CD4-positive, alpha-beta memory T cell (primary cell): ENCODE measurements at regions of chr1 and their contacts with region 1.

Region 1: GRCh38 chr1:83508485-83509151 is 490.3 kb downstream of the TTLL7 start:
- DNase-seq: peak; percentile 66 to 79 (median 68)
- H3K4me3 ChIP-seq: peak overlapping the region in 1 of 2 donors; percentile 12
- H3K4me3 Mint-ChIP-seq: peak overlapping the region; percentile 55 to 79 (median 72)
- H3K27ac ChIP-seq: peak overlapping the region; percentile 14
- H3K27ac Mint-ChIP-seq: peak overlapping the region; percentile 81 to 93 (median 88)
- H3K4me1 ChIP-seq: peaks cover 29% of the 10 kb centered on the region
- H3K4me1 Mint-ChIP-seq: peaks cover 27 to 41% (median 30%) of the 10 kb centered on the region in 4 donors
- H3K27me3 ChIP-seq: no peaks in the 10 kb centered on the region
- H3K27me3 Mint-ChIP-seq: no peaks in the 10 kb centered on the region

Region 2: GRCh38 chr1:83490988-83491387 is 17.6 kb before region 1 on chr1:
- CTCF ChIA-PET with region 1: no interaction called
- POLR2A ChIA-PET with region 1: no interaction called
- intact Hi-C with region 1: no loop called
- DNase-seq: no peak
- H3K4me3 ChIP-seq: no peak overlapping the region
- H3K4me3 Mint-ChIP-seq: no peak overlapping the region
- H3K27ac ChIP-seq: no peak overlapping the region
- H3K27ac Mint-ChIP-seq: no peak overlapping the region
- H3K4me1 ChIP-seq: peaks cover 5% of the 10 kb centered on the region
- H3K4me1 Mint-ChIP-seq: peaks cover 5 to 8% (median 5%) of the 10 kb centered on the region in 4 donors
- H3K27me3 ChIP-seq: no peaks in the 10 kb centered on the region
- H3K27me3 Mint-ChIP-seq: no peaks in the 10 kb centered on the region

Region 3: DNA sequence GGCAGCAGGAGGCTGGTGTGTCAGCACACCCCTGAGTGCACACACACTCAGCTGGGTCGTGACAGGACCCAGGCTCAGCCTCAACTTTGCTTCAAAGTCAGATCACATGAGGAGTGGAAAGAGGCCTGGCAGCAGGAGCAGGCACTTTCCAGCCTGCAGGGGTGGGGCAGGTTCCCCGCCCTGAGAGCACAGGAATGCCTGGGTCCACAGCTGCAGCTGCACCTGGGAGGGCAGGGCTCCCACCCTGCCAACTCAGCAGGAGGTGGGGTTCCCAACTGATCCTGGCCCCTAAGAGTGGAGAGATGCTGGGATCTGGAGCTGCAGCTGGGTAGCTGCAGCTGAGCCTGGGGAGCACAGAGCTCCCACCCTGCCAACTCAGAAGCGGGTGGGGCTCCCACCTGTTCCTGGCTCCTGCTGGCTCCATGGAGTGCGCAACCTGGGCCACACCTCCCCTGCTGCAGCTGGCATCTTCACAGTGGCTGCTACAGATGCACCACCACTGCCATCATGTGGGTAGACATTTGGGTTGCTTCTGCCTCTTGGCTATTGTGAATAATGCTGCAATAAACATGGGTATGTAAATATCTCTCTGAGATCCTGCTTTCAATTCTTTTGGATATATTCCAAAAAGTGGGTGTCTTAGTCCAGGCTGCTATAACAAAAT is 74.9 kb after region 1 on chr1:
- CTCF ChIA-PET with region 1: no interaction called
- POLR2A ChIA-PET with region 1: interaction called, 3 read pairs
- intact Hi-C with region 1: loop called (anchors 1 kb)
- DNase-seq: peak in 4 of 5 donors; percentile 5 to 32 (median 12)
- H3K4me3 ChIP-seq: no peak overlapping the region
- H3K4me3 Mint-ChIP-seq: peak overlapping the region in 1 of 8 donors; percentile 51
- H3K27ac ChIP-seq: no peak overlapping the region
- H3K27ac Mint-ChIP-seq: no peak overlapping the region
- H3K4me1 ChIP-seq: no peaks in the 10 kb centered on the region
- H3K4me1 Mint-ChIP-seq: peaks cover 0 to 11% (median 3%) of the 10 kb centered on the region in 4 donors
- H3K27me3 ChIP-seq: no peaks in the 10 kb centered on the region
- H3K27me3 Mint-ChIP-seq: peaks cover 0 to 1% of the 10 kb centered on the region in 2 donors

Region 4: GRCh38 chr1:83889707-83890106 is 381.1 kb after region 1 on chr1:
- CTCF ChIA-PET with region 1: no interaction called
- POLR2A ChIA-PET with region 1: no interaction called
- intact Hi-C with region 1: no loop called
- DNase-seq: no peak
- H3K4me3 ChIP-seq: no peak overlapping the region
- H3K4me3 Mint-ChIP-seq: no peak overlapping the region
- H3K27ac ChIP-seq: no peak overlapping the region
- H3K27ac Mint-ChIP-seq: no peak overlapping the region
- H3K4me1 ChIP-seq: no peaks in the 10 kb centered on the region
- H3K4me1 Mint-ChIP-seq: no peaks in the 10 kb centered on the region
- H3K27me3 ChIP-seq: no peaks in the 10 kb centered on the region
- H3K27me3 Mint-ChIP-seq: peaks cover 3 to 10% of the 10 kb centered on the region in 2 donors